ENCODE measurements at regions of chr7 and their contacts with region 1.

Region 1: GRCh38 chr7:45347804-45348412 is 190.3 kb downstream of the RAMP3 start:
- DNase-seq: no peak

Region 2: DNA sequence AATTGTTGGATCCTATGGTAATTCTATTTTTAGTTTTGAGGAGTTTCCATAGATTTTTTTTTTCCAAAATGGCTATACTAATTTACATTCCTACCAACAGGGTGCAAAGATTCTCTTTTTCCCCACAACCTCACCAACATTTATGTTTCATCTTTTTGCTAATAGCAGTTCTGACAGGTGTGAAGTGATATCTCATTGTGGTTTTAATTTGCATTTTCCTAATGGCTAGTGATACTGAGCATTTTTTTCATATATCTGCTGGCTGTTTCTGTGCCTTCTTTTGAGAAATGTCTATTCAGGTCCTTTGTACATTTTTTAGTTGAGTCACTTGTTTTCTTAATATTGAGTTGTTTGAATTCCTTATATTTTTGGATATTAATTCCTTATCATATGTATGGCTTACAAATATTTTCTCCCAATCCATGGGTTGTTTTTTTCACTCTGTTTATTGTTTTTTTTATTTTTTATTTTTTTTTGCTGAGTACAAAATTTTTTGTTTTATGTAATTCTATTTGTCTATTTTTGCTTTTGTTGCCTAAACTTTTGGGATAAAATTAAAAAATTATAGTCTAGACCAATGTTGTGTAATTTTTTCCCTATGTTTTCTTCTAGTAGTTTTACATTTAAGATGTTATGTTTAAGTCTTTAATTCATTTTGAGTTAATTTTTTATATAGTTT is 20.4 kb after region 1 on chr7:
- intact Hi-C with region 1: loop called in 1 of 2 experiments (anchors 1 kb)
- DNase-seq: no peak

Region 3: GRCh38 chr7:46461334-46461777 is 1113.4 kb after region 1 on chr7:
- intact Hi-C with region 1: no loop called
- DNase-seq: no peak